Panc1 (cell line): ENCODE measurements at regions of chr5 and their contacts with region 1.

Region 1: GRCh38 chr5:77143998-77144836 is 57.1 kb upstream of the ZBED3 start:
- DNase-seq: peak; percentile 62
- ATAC-seq: peak; percentile 96
- H3K4me3 ChIP-seq: peak overlapping the region in 1 of 2 experiments; percentile 0; a peak in 1 of 4 replicates
- H3K27ac ChIP-seq: no peak overlapping the region
- H3K4me1 ChIP-seq: peaks cover 3% of the 10 kb centered on the region; the same call in 1 of the 2 replicates
- H3K27me3 ChIP-seq: peaks cover 4% of the 10 kb centered on the region; the same call in 1 of the 2 replicates
- CTCF ChIP-seq: peak; percentile 95

Region 2: GRCh38 chr5:77210091-77210963 is 66.1 kb after region 1 on chr5 and contains the start of gene PDE8B:
- CTCF ChIA-PET with region 1: no interaction called
- POLR2A ChIA-PET with region 1: no interaction called
- in situ Hi-C with region 1: no loop called
- intact Hi-C with region 1: no loop called
- DNase-seq: no peak
- ATAC-seq: peak; percentile 52
- H3K4me3 ChIP-seq: peak within 1 kb of the TSS; percentile 23; a peak in 3 of 4 replicates
- H3K27ac ChIP-seq: no peak within 1 kb of the TSS
- H3K4me1 ChIP-seq: peaks cover under 1% of the 10 kb centered on the region
- H3K27me3 ChIP-seq: peaks cover 60% of the 10 kb centered on the region
- CTCF ChIP-seq: no peak
- total RNA-seq, gene PDE8B: 0.62 TPM

Region 3: GRCh38 chr5:77239126-77239741 is 95.0 kb after region 1 on chr5:
- CTCF ChIA-PET with region 1: interaction called, 4 read pairs
- POLR2A ChIA-PET with region 1: no interaction called
- in situ Hi-C with region 1: no loop called
- intact Hi-C with region 1: loop called (anchors 1 kb)
- DNase-seq: no peak
- ATAC-seq: no peak
- H3K4me3 ChIP-seq: no peak overlapping the region
- H3K27ac ChIP-seq: no peak overlapping the region
- H3K4me1 ChIP-seq: no peaks in the 10 kb centered on the region
- H3K27me3 ChIP-seq: peaks cover 8% of the 10 kb centered on the region
- CTCF ChIP-seq: peak; percentile 50; the same call in 1 of the 2 replicates

Region 4: GRCh38 chr5:77426670-77427069 is 282.5 kb after region 1 on chr5:
- CTCF ChIA-PET with region 1: no interaction called
- POLR2A ChIA-PET with region 1: no interaction called
- in situ Hi-C with region 1: no loop called
- intact Hi-C with region 1: loop called (anchors 10 kb)
- DNase-seq: peak; percentile 10
- ATAC-seq: no peak
- H3K4me3 ChIP-seq: no peak overlapping the region
- H3K27ac ChIP-seq: no peak overlapping the region
- H3K4me1 ChIP-seq: no peaks in the 10 kb centered on the region
- H3K27me3 ChIP-seq: no peaks in the 10 kb centered on the region
- CTCF ChIP-seq: no peak

Region 5: GRCh38 chr5:77491783-77492652 is 347.8 kb after region 1 on chr5 and contains the start of gene WDR41:
- CTCF ChIA-PET with region 1: no interaction called
- POLR2A ChIA-PET with region 1: no interaction called
- in situ Hi-C with region 1: no loop called
- intact Hi-C with region 1: loop called (anchors 5 kb)
- DNase-seq: peak; percentile 80
- ATAC-seq: peak; percentile 99
- H3K4me3 ChIP-seq: peak within 1 kb of the TSS; percentile 84 to 89
- H3K27ac ChIP-seq: peak within 1 kb of the TSS; percentile 98
- H3K4me1 ChIP-seq: 0 out of 2 replicates have a peak, but pooled peaks cover 14% of the 10 kb centered on the region
- H3K27me3 ChIP-seq: no peaks in the 10 kb centered on the region; the same call in 1 of the 2 replicates
- CTCF ChIP-seq: peak; percentile 98
- total RNA-seq, gene WDR41: 57.3 TPM

Region 6: GRCh38 chr5:78127875-78128274 is 983.7 kb after region 1 on chr5:
- CTCF ChIA-PET with region 1: no interaction called
- POLR2A ChIA-PET with region 1: no interaction called
- in situ Hi-C with region 1: no loop called
- intact Hi-C with region 1: no loop called
- DNase-seq: no peak
- ATAC-seq: no peak
- H3K4me3 ChIP-seq: no peak overlapping the region
- H3K27ac ChIP-seq: no peak overlapping the region
- H3K4me1 ChIP-seq: no peaks in the 10 kb centered on the region
- H3K27me3 ChIP-seq: no peaks in the 10 kb centered on the region
- CTCF ChIP-seq: peak; percentile 60; the same call in 1 of the 2 replicates